Prostate gland (tissue), 2 donors: ENCODE measurements at regions of chr3 and their contacts with region 1.

Region 1: DNA sequence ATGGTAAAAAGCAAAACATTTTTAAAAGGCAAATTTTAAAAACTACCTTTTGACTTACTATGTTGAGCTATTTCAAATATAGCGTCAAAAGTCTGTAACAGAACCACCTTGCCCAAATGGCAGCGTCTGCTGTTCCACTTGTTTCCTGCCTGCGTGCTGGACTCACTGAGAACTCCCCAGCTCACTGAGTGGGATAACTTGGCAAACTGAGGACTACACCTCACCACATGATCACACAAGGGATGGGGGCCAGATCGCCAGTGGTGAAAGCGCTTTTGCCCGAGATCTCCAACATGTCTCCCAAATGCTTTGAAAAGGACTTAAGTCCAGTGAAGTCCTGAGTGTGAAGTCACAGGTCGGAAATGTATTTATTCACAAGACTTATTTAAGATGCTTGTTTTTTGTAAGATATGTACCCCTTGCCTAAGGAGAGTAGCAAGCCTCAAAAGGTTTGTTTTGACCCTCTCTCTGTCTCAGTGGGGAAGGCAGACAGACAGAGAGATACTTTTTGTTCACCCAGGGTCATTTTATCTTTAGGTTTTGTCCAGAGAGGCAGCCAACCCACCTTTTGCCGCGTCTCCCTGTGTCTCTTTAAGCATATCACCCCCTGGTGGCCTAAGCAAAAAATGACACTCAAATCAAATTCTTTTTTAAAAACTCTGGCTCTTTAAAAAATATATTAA is 192.6 kb downstream of the PDZRN3 start:
- DNase-seq: no peak
- H3K4me3 ChIP-seq: no peak overlapping the region
- H3K27ac ChIP-seq: peak overlapping the region in 1 of 2 donors; percentile 3
- H3K4me1 ChIP-seq: peaks cover 3% of the 10 kb centered on the region
- H3K27me3 ChIP-seq: no peaks in the 10 kb centered on the region
- CTCF ChIP-seq: peak; percentile 34 to 69 (median 54)
- POLR2A ChIP-seq: no peak

Region 2: DNA sequence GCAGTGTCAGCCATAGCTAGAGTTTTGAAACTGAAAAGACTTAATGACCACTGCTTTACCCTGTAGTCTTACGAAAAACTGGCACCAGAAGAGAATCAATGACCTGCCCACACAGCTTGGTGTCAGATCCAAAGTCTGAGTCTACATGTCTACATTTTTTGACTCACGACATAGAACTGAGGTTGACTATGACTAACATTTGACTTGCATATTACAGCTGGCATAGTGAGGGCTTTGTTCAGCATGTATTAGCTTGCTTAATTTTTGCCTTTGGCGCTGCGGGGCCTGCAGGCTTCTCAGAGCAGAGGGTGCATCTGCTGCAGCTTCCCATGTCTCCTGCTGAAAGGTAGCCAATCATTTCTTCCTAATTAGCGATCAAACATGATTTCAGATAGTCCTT is 203.7 kb before region 1 on chr3:
- intact Hi-C with region 1: no loop called
- DNase-seq: no peak
- H3K4me3 ChIP-seq: no peak overlapping the region
- H3K27ac ChIP-seq: no peak overlapping the region
- H3K4me1 ChIP-seq: no peaks in the 10 kb centered on the region
- H3K27me3 ChIP-seq: no peaks in the 10 kb centered on the region
- CTCF ChIP-seq: no peak
- POLR2A ChIP-seq: no peak

Region 3: GRCh38 chr3:73324203-73325155 is 107.7 kb before region 1 on chr3:
- intact Hi-C with region 1: loop called (anchors 5 kb)
- DNase-seq: no peak
- H3K4me3 ChIP-seq: no peak overlapping the region
- H3K27ac ChIP-seq: no peak overlapping the region
- H3K4me1 ChIP-seq: no peaks in the 10 kb centered on the region
- H3K27me3 ChIP-seq: no peaks in the 10 kb centered on the region
- CTCF ChIP-seq: no peak
- POLR2A ChIP-seq: no peak

Region 4: DNA sequence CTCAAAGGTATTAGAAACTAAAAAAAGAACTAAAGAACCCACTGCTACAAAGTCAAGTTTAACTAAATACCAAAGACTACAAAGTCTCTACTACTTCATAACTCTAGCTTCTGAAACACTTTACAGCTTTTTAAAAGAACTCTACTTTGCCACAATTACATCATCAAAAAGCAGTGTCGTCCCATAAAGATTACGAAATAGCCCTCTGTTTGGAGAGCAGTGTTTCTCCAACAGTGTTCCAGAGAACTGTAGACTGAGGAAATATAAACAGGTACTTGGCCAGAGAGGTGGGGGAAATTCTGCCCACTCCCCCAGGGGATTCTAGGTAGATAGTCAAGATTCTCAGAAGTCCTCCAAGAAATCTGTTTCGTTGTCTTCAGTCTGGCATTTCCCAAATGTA is 33.1 kb before region 1 on chr3:
- intact Hi-C with region 1: loop called (anchors 5 kb)
- DNase-seq: no peak
- H3K4me3 ChIP-seq: no peak overlapping the region
- H3K27ac ChIP-seq: no peak overlapping the region
- H3K4me1 ChIP-seq: no peaks in the 10 kb centered on the region
- H3K27me3 ChIP-seq: no peaks in the 10 kb centered on the region
- CTCF ChIP-seq: no peak
- POLR2A ChIP-seq: no peak